CD4-positive, alpha-beta memory T cell (primary cell): ENCODE measurements at regions of chr1 and their contacts with region 1.

Region 1: GRCh38 chr1:167936068-167936929 is at the start of gene DCAF6:
- DNase-seq: peak; percentile 98 to 99 (median 99)
- H3K4me3 ChIP-seq: peak within 1 kb of the TSS; percentile 69 to 90
- H3K4me3 Mint-ChIP-seq: peak within 1 kb of the TSS; percentile 90 to 99 (median 94)
- H3K27ac ChIP-seq: peak within 1 kb of the TSS; percentile 85
- H3K27ac Mint-ChIP-seq: peak within 1 kb of the TSS; percentile 97 to 100 (median 98)
- H3K4me1 ChIP-seq: peaks cover 28% of the 10 kb centered on the region
- H3K4me1 Mint-ChIP-seq: peaks cover 29 to 58% (median 43%) of the 10 kb centered on the region in 4 donors
- H3K27me3 ChIP-seq: no peaks in the 10 kb centered on the region
- H3K27me3 Mint-ChIP-seq: no peaks in the 10 kb centered on the region
- total RNA-seq, gene DCAF6: 28.3 to 29.2 TPM

Region 2: GRCh38 chr1:166875734-166876539 is 1060.4 kb before region 1 on chr1 and contains the start of gene TADA1:
- CTCF ChIA-PET with region 1: no interaction called
- POLR2A ChIA-PET with region 1: interaction called, 6 read pairs
- intact Hi-C with region 1: loop called (anchors 5 kb)
- DNase-seq: peak; percentile 96 to 99 (median 97)
- H3K4me3 ChIP-seq: peak within 1 kb of the TSS; percentile 52 to 88
- H3K4me3 Mint-ChIP-seq: peak within 1 kb of the TSS; percentile 95 to 100 (median 99)
- H3K27ac ChIP-seq: peak within 1 kb of the TSS; percentile 69
- H3K27ac Mint-ChIP-seq: peak within 1 kb of the TSS; percentile 92 to 99 (median 99)
- H3K4me1 ChIP-seq: peaks cover 32% of the 10 kb centered on the region
- H3K4me1 Mint-ChIP-seq: peaks cover 32 to 56% (median 45%) of the 10 kb centered on the region in 4 donors
- H3K27me3 ChIP-seq: no peaks in the 10 kb centered on the region
- H3K27me3 Mint-ChIP-seq: peaks cover 0 to 1% of the 10 kb centered on the region in 2 donors
- total RNA-seq, gene TADA1: 15.3 to 16.0 TPM

Region 3: GRCh38 chr1:167715157-167715999 is 220.9 kb before region 1 on chr1:
- CTCF ChIA-PET with region 1: no interaction called
- POLR2A ChIA-PET with region 1: interaction called, 13 read pairs
- intact Hi-C with region 1: loop called (anchors 1 kb)
- DNase-seq: peak; percentile 87 to 91 (median 88)
- H3K4me3 ChIP-seq: peak overlapping the region; percentile 80 to 87
- H3K4me3 Mint-ChIP-seq: peak overlapping the region; percentile 84 to 98 (median 92)
- H3K27ac ChIP-seq: peak overlapping the region; percentile 39
- H3K27ac Mint-ChIP-seq: peak overlapping the region; percentile 90 to 99 (median 94)
- H3K4me1 ChIP-seq: peaks cover 31% of the 10 kb centered on the region
- H3K4me1 Mint-ChIP-seq: peaks cover 19 to 49% (median 38%) of the 10 kb centered on the region in 4 donors
- H3K27me3 ChIP-seq: no peaks in the 10 kb centered on the region
- H3K27me3 Mint-ChIP-seq: peaks cover 4 to 12% of the 10 kb centered on the region in 2 donors

Region 4: GRCh38 chr1:168178638-168179437 is 242.5 kb after region 1 on chr1 and contains the start of gene TIPRL:
- CTCF ChIA-PET with region 1: no interaction called
- POLR2A ChIA-PET with region 1: interaction called, 13 read pairs
- intact Hi-C with region 1: loop called (anchors 1 kb)
- DNase-seq: peak; percentile 93 to 94 (median 94)
- H3K4me3 ChIP-seq: peak within 1 kb of the TSS; percentile 86 to 99
- H3K4me3 Mint-ChIP-seq: peak within 1 kb of the TSS in 2 of 8 donors; percentile 18 to 26
- H3K27ac ChIP-seq: peak within 1 kb of the TSS; percentile 95
- H3K27ac Mint-ChIP-seq: no peak within 1 kb of the TSS
- H3K4me1 ChIP-seq: peaks cover 24% of the 10 kb centered on the region
- H3K4me1 Mint-ChIP-seq: peaks cover 3 to 17% (median 9%) of the 10 kb centered on the region in 4 donors
- H3K27me3 ChIP-seq: no peaks in the 10 kb centered on the region
- H3K27me3 Mint-ChIP-seq: no peaks in the 10 kb centered on the region
- total RNA-seq, gene TIPRL: 23.8 to 28.3 TPM

Region 5: DNA sequence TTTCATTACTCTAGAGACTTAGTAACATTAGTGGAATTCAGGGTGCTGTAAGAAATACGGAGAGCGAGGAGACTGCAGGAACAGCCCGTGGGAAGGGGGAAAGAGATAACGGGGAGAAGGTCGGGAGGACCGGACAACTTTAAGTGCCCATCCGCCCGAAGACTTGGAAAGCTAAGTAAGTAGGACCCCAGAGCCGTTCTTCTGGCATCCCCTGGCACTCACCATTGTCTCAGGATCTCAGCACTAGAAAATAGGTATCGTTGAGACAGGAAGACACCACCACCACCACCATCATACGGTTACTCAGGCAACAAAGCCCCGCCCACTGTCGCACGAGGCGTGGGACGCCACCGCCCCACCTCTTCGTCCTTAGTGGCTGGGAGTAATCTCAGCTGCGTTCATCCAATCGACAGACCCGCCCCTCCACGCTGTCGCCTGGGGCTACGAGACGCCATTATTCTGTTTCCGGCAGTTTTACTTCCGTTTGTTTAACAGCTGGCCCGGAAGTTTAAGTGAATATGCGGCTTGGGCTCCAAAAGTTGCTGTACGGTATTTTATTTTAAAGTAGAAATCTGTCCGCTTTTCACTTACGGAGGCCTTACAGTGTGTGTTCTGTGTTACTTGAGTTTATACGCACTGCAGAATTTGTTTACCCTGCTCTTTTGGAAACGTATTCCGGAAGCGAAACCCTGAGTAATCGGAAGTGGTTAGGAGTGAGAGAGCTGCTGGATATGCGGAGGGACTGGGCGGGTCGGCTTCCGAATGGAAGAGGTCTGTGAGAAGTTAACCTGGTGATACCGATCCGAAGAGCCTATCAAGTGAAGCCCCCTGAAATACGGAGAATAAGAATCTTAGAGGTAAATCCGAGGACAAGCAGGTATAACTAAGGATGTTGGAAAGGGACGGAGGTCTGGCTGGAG is 1431.4 kb after region 1 on chr1 and contains the starts of genes BLZF1 and NME7:
- CTCF ChIA-PET with region 1: interaction called, 3 read pairs
- POLR2A ChIA-PET with region 1: interaction called, 6 read pairs
- intact Hi-C with region 1: loop called (anchors 1 kb)
- DNase-seq: peak; percentile 95 to 99 (median 98)
- H3K4me3 ChIP-seq: peak within 1 kb of the TSS; percentile 96
- H3K4me3 Mint-ChIP-seq: peak within 1 kb of the TSS in 3 of 8 donors; percentile 16 to 51 (median 24)
- H3K27ac ChIP-seq: peak within 1 kb of the TSS; percentile 71
- H3K27ac Mint-ChIP-seq: peak within 1 kb of the TSS in 3 of 7 donors; percentile 25 to 54 (median 33)
- H3K4me1 ChIP-seq: peaks cover 44% of the 10 kb centered on the region
- H3K4me1 Mint-ChIP-seq: peaks cover 22 to 31% (median 23%) of the 10 kb centered on the region in 4 donors
- H3K27me3 ChIP-seq: no peaks in the 10 kb centered on the region
- H3K27me3 Mint-ChIP-seq: no peaks in the 10 kb centered on the region
- total RNA-seq, gene BLZF1: 20.0 to 23.8 TPM
- total RNA-seq, gene NME7: 12.0 to 14.3 TPM

Region 6: DNA sequence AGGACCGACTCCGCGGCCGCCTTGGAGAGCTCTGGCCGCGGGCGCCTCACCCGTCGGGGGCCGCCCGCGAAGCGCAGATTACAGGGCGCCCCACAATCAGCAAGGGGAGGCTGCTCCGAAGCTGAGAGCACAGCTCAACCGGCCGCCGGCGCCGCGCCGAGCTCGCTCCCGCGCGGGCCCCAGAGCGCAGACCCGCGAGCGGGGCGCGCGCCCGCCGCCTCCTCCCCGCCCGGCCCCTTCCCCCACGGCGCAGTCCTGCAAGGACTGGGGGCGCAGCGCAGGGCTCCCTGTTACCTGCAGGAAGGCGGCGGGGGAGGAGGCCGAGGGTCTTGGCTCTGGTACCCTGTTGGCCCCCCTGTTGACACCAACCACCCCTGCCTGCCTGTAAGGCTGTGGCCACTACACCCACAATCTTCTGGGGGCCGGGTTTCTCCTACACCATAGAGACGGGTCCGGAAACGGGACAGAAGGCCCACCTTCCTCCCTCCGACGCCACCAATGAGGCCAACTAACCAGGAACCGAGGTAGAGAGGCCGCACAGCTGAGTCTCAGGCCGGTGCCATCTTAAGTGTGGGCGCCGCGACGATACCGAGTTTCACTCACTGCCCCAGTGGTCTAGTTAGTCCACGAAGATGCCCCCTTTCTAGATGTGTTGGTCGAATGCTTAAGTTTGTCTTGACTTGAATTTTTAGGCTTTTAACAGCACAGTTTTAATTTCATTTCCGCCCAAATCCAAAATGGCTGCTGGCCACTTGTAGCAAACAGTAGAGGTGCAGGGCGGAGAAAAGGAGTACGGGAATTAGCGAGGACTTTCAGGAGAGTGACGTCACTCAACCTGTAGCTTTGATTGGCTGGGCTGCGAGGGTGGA is 1957.4 kb after region 1 on chr1 and contains the start of gene SCYL3:
- CTCF ChIA-PET with region 1: no interaction called
- POLR2A ChIA-PET with region 1: interaction called, 4 read pairs
- intact Hi-C with region 1: loop called (anchors 1 kb)
- DNase-seq: peak; percentile 96 to 97 (median 96)
- H3K4me3 ChIP-seq: peak within 1 kb of the TSS; percentile 58 to 86
- H3K4me3 Mint-ChIP-seq: peak within 1 kb of the TSS; percentile 92 to 97 (median 94)
- H3K27ac ChIP-seq: peak within 1 kb of the TSS; percentile 98
- H3K27ac Mint-ChIP-seq: peak within 1 kb of the TSS; percentile 97 to 100 (median 100)
- H3K4me1 ChIP-seq: peaks cover 46% of the 10 kb centered on the region
- H3K4me1 Mint-ChIP-seq: peaks cover 35 to 51% (median 43%) of the 10 kb centered on the region in 4 donors
- H3K27me3 ChIP-seq: no peaks in the 10 kb centered on the region
- H3K27me3 Mint-ChIP-seq: peaks cover 0 to 2% of the 10 kb centered on the region in 2 donors
- total RNA-seq, gene SCYL3: 23.5 to 24.3 TPM